ENCODE measurements at regions of chr3 and their contacts with region 1.

Region 1: GRCh38 chr3:27632431-27633223 is 89.5 kb downstream of the EOMES start:
- DNase-seq: peak; percentile 26
- H3K4me3 ChIP-seq: peak overlapping the region; percentile 62
- H3K27ac ChIP-seq: peak overlapping the region; percentile 63
- H3K27me3 ChIP-seq: no peaks in the 10 kb centered on the region
- CTCF ChIP-seq: no peak

Region 2: DNA sequence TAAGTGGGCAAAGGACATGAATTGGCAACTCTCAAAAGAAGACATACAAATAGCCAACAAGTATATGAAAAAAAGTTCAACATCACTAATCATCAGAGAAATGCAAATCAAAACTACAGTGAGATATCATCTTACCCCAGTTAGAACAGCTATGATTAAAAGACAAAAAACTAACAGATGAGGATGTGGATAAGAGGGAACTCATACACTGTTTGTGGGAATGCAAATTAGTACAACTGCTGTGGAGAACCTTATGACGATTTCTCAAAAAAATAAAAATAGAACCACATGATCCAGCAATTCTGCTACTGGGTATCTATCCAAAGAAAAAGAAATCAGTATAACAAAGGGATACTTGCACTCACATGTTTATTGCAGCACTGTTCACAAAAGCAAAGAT is 292.1 kb before region 1 on chr3:
- CTCF ChIA-PET with region 1: no interaction called
- POLR2A ChIA-PET with region 1: no interaction called
- DNase-seq: no peak
- H3K4me3 ChIP-seq: no peak overlapping the region
- H3K27ac ChIP-seq: no peak overlapping the region
- H3K27me3 ChIP-seq: no peaks in the 10 kb centered on the region
- CTCF ChIP-seq: no peak

Region 3: DNA sequence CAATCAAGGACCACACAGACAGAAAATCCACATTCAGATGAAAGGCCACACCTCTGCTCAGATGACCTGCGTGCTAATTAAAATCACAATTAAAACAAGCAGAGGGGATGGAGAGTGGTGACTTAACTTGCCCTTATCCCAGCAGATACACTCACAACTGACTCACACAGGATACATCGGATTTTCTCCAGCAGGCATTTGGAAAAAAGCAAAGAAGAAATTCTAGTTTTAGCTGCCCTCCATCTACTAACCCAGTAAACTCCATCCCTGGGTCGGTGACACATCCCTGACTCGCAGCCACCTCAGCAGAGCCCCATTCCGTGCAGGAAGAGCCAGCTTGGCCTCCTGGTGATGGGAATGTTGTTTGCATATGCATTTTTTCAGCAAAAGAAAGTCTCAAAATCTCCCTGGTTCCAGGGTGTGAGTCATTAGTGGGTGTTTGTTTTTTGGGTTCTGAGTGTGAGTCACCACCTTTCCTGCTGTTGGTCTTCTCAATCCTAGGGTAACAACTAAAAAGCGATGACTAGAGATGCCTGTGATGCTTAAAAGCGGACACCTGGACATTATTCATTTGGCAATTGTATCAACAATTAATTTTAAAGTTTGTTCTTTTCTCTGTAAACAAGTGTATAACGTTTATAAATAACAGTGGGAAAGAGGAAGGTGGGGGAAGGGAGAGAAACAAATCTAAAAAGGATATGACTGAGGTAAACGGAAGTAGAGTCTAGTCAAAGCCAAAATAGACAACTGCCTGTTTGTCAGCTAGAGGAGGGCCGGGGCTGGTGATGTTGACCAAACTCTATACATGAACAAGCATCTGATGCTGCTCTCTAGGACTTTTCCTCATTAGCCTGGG is 98.7 kb before region 1 on chr3:
- CTCF ChIA-PET with region 1: no interaction called
- POLR2A ChIA-PET with region 1: interaction called, 13 read pairs
- DNase-seq: peak; percentile 97
- H3K4me3 ChIP-seq: no peak overlapping the region
- H3K27ac ChIP-seq: peak overlapping the region; percentile 94
- H3K27me3 ChIP-seq: no peaks in the 10 kb centered on the region
- CTCF ChIP-seq: peak; percentile 78

Region 4: DNA sequence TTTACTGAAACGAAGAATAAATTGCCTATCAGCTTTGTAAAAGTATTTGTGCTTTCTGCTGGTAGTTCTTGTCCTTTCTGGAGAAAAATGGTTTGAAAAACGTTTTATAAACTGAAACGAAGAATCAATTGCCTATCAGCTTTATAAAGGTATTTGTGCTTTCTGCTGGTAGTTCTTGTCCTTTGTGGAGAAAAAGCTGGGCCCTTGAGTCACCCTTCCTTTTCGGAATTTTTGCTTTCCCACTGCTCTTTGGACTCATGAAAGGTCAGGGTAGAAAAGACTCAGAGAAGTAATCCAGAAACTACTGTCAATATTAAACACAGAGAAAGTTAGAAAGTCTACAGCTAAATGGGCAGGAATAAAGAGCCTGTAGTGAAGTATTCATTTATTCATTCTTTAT is 16.6 kb after region 1 on chr3:
- CTCF ChIA-PET with region 1: no interaction called
- POLR2A ChIA-PET with region 1: no interaction called
- DNase-seq: no peak
- H3K4me3 ChIP-seq: no peak overlapping the region
- H3K27ac ChIP-seq: no peak overlapping the region
- H3K27me3 ChIP-seq: no peaks in the 10 kb centered on the region
- CTCF ChIP-seq: no peak

Region 5: GRCh38 chr3:27688053-27688452 is 55.4 kb after region 1 on chr3:
- CTCF ChIA-PET with region 1: no interaction called
- POLR2A ChIA-PET with region 1: no interaction called
- DNase-seq: no peak
- H3K4me3 ChIP-seq: no peak overlapping the region
- H3K27ac ChIP-seq: no peak overlapping the region
- H3K27me3 ChIP-seq: no peaks in the 10 kb centered on the region
- CTCF ChIP-seq: no peak